PC-3 (cell line): ENCODE measurements at regions of chr18 and their contacts with region 1.

Region 1: GRCh38 chr18:65659912-65660311 is 90.9 kb upstream of the CDH7 start:
- DNase-seq: peak; percentile 95
- ATAC-seq: peak; percentile 90
- H3K4me3 ChIP-seq: peak overlapping the region; percentile 42; the same call in 1 of the 2 replicates
- H3K27ac ChIP-seq: peak overlapping the region; percentile 97
- H3K4me1 ChIP-seq: peaks cover 28% of the 10 kb centered on the region
- H3K27me3 ChIP-seq: no peaks in the 10 kb centered on the region
- CTCF ChIP-seq: no peak

Region 2: GRCh38 chr18:64713284-64713683 is 946.6 kb before region 1 on chr18:
- CTCF ChIA-PET with region 1: no interaction called
- POLR2A ChIA-PET with region 1: no interaction called
- intact Hi-C with region 1: loop called (anchors 2 kb)
- DNase-seq: peak; percentile 40
- ATAC-seq: no peak
- H3K4me3 ChIP-seq: no peak overlapping the region
- H3K27ac ChIP-seq: peak overlapping the region; percentile 21; the same call in 1 of the 2 replicates
- H3K4me1 ChIP-seq: peaks cover 68% of the 10 kb centered on the region
- H3K27me3 ChIP-seq: no peaks in the 10 kb centered on the region
- CTCF ChIP-seq: no peak

Region 3: DNA sequence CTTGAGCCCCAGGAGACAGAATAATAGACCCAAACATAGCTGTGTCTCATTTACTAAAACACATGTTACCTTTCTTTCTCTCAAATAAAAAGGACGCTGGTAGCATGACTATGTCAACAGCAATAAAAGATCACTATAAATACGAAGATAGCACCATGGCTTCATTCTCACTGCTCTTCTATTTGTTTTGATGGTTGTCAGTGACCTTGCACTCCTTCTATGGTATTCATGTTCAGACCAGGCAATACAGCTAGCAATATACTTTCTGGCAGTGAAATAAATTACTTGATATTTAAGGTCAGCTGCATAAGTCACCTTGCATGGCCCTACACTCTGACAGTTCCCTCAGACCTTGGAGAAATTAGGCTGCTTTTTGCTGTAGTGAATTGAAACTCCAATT is 172.3 kb before region 1 on chr18:
- CTCF ChIA-PET with region 1: no interaction called
- POLR2A ChIA-PET with region 1: interaction called, 14 read pairs
- intact Hi-C with region 1: no loop called
- DNase-seq: no peak
- ATAC-seq: no peak
- H3K4me3 ChIP-seq: no peak overlapping the region
- H3K27ac ChIP-seq: no peak overlapping the region
- H3K4me1 ChIP-seq: no peaks in the 10 kb centered on the region
- H3K27me3 ChIP-seq: no peaks in the 10 kb centered on the region
- CTCF ChIP-seq: no peak

Region 4: DNA sequence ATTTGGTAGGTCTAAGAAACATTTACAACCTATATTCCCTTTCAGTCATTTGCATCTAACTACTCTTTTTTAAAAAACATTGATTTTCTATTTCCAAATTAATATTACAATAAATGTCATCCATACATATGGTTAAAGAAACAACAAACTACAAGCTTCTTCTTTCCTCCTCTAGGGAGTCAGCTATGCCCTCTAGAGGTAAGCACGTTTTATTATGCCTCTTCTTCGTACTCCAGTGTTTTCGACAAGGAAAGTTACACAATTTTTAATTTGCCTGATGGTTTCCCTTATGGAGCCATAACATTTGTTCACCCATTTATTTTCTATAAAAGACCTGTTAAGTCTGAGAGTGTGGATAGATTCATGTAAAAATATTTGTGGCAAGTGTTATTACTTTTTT is 92.5 kb before region 1 on chr18:
- CTCF ChIA-PET with region 1: interaction called, 3 read pairs
- POLR2A ChIA-PET with region 1: no interaction called
- intact Hi-C with region 1: loop called (anchors 5 kb)
- DNase-seq: peak; percentile 64
- ATAC-seq: peak; percentile 68
- H3K4me3 ChIP-seq: no peak overlapping the region
- H3K27ac ChIP-seq: no peak overlapping the region
- H3K4me1 ChIP-seq: peaks cover 10% of the 10 kb centered on the region
- H3K27me3 ChIP-seq: no peaks in the 10 kb centered on the region
- CTCF ChIP-seq: peak; percentile 79

Region 5: GRCh38 chr18:65725251-65726050 is 65.5 kb after region 1 on chr18:
- CTCF ChIA-PET with region 1: no interaction called
- POLR2A ChIA-PET with region 1: no interaction called
- intact Hi-C with region 1: loop called (anchors 5 kb)
- DNase-seq: peak; percentile 73
- ATAC-seq: peak; percentile 87
- H3K4me3 ChIP-seq: peak overlapping the region; percentile 16; the same call in 1 of the 2 replicates
- H3K27ac ChIP-seq: no peak overlapping the region
- H3K4me1 ChIP-seq: no peaks in the 10 kb centered on the region
- H3K27me3 ChIP-seq: no peaks in the 10 kb centered on the region
- CTCF ChIP-seq: peak; percentile 80

Region 6: DNA sequence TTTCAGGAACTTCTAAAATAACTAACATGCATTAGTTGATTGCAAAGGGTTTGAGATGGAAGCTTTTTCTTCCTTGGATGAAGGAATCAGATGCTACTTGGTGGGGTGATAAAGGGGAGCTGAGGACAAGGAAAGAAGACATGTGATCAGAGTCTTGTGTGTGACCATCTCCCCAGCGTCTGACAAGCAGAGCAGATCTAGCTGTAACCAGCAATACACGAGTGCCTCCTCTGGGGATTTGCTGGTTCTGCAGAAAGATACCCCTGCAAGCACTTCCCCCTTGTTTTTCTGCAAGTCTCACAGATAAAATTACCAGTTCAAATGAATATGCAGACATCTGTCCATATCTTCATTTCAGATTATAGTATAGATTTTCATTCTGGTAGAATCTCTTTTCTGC is 93.6 kb after region 1 on chr18:
- CTCF ChIA-PET with region 1: interaction called, 10 read pairs
- POLR2A ChIA-PET with region 1: no interaction called
- intact Hi-C with region 1: no loop called
- DNase-seq: peak; percentile 76
- ATAC-seq: peak; percentile 60
- H3K4me3 ChIP-seq: peak overlapping the region; percentile 89; the same call in 1 of the 2 replicates
- H3K27ac ChIP-seq: no peak overlapping the region
- H3K4me1 ChIP-seq: peaks cover 44% of the 10 kb centered on the region
- H3K27me3 ChIP-seq: no peaks in the 10 kb centered on the region
- CTCF ChIP-seq: peak; percentile 83

Region 7: GRCh38 chr18:65768379-65768778 is 108.5 kb after region 1 on chr18:
- CTCF ChIA-PET with region 1: no interaction called
- POLR2A ChIA-PET with region 1: no interaction called
- intact Hi-C with region 1: loop called (anchors 1 kb)
- DNase-seq: peak; percentile 90
- ATAC-seq: peak; percentile 97
- H3K4me3 ChIP-seq: 0 out of 2 replicates have a peak overlapping the region, but pooled peaks have one; percentile 17
- H3K27ac ChIP-seq: peak overlapping the region; percentile 78
- H3K4me1 ChIP-seq: peaks cover 32% of the 10 kb centered on the region
- H3K27me3 ChIP-seq: no peaks in the 10 kb centered on the region
- CTCF ChIP-seq: no peak